MCF 10A (cell line): ENCODE measurements at regions of chr2 and their contacts with region 1.

Region 1: GRCh38 chr2:58448065-58448507 is 207.0 kb upstream of the FANCL start:
- DNase-seq: peak; percentile 92
- H3K4me3 Mint-ChIP-seq: no peak overlapping the region
- H3K27ac Mint-ChIP-seq: peak overlapping the region; percentile 17
- H3K4me1 Mint-ChIP-seq: peaks cover 14% of the 10 kb centered on the region
- H3K27me3 Mint-ChIP-seq: no peaks in the 10 kb centered on the region
- CTCF ChIP-seq: peak; percentile 73

Region 2: DNA sequence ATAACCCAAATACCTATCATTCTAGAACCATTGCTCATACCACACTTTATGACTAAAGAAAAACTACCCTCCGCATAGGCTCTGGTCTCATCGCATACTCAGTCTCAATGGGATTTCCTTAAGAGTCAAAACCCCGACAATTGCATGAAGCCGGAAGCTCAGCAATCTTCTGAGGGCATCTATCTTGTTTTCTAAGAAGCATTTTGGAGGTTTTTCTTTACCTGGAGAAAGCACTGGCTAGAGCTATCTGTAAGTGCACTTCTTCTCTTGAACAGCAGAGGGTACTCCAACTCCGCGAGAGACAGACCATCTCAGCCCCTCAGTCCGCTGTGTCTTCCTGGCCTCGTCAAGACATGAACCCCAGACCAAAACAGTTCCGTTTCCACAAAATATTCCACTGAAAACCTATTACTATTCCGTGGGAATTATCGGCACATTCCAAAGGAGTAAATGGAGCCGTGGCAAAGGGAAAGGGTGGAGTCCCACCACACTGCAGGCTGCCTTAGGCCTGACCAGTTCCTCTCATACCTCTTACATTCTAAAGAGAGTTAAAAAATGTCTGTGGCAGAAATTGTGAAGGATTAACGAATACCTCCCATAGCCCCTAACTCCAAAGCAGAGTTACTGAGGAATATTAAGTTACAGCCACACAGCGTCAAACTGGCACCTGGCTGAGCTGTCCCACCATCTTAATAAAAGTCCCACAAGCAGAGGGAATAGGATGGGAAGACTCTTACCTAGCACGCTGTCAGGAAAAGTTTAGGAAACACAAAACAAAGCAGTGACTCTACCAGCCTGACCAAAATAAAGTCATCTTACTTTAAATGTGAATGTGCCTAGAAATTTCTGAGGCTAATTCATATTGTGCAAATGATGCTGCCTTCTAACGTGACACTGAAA is 727.1 kb before region 1 on chr2:
- CTCF ChIA-PET with region 1: interaction called, 3 read pairs
- POLR2A ChIA-PET with region 1: no interaction called
- intact Hi-C with region 1: loop called (anchors 1 kb)
- DNase-seq: peak; percentile 69
- H3K4me3 Mint-ChIP-seq: peak overlapping the region; percentile 64
- H3K27ac Mint-ChIP-seq: no peak overlapping the region
- H3K4me1 Mint-ChIP-seq: peaks cover 11% of the 10 kb centered on the region
- H3K27me3 Mint-ChIP-seq: no peaks in the 10 kb centered on the region
- CTCF ChIP-seq: peak; percentile 66

Region 3: GRCh38 chr2:58046585-58047372 is 401.3 kb before region 1 on chr2 and contains the start of gene VRK2:
- CTCF ChIA-PET with region 1: no interaction called
- POLR2A ChIA-PET with region 1: no interaction called
- intact Hi-C with region 1: loop called (anchors 5 kb)
- DNase-seq: peak; percentile 97
- H3K4me3 Mint-ChIP-seq: peak within 1 kb of the TSS; percentile 86
- H3K27ac Mint-ChIP-seq: peak within 1 kb of the TSS; percentile 90
- H3K4me1 Mint-ChIP-seq: peaks cover 17% of the 10 kb centered on the region
- H3K27me3 Mint-ChIP-seq: no peaks in the 10 kb centered on the region
- CTCF ChIP-seq: no peak
- total RNA-seq, gene VRK2: 44.6 and 52.7 TPM in 2 replicates

Region 4: GRCh38 chr2:58204195-58204959 is 243.7 kb before region 1 on chr2:
- CTCF ChIA-PET with region 1: interaction called, 3 read pairs
- POLR2A ChIA-PET with region 1: no interaction called
- intact Hi-C with region 1: loop called (anchors 10 kb)
- DNase-seq: no peak
- H3K4me3 Mint-ChIP-seq: no peak overlapping the region
- H3K27ac Mint-ChIP-seq: no peak overlapping the region
- H3K4me1 Mint-ChIP-seq: peaks cover 8% of the 10 kb centered on the region
- H3K27me3 Mint-ChIP-seq: no peaks in the 10 kb centered on the region
- CTCF ChIP-seq: no peak

Region 5: GRCh38 chr2:58571181-58571852 is 123.2 kb after region 1 on chr2:
- CTCF ChIA-PET with region 1: interaction called, 4 read pairs
- POLR2A ChIA-PET with region 1: no interaction called
- intact Hi-C with region 1: loop called (anchors 1 kb)
- DNase-seq: peak; percentile 88
- H3K4me3 Mint-ChIP-seq: no peak overlapping the region
- H3K27ac Mint-ChIP-seq: peak overlapping the region; percentile 75
- H3K4me1 Mint-ChIP-seq: peaks cover 18% of the 10 kb centered on the region
- H3K27me3 Mint-ChIP-seq: no peaks in the 10 kb centered on the region
- CTCF ChIP-seq: peak; percentile 87

Region 6: GRCh38 chr2:58896638-58897037 is 448.6 kb after region 1 on chr2:
- CTCF ChIA-PET with region 1: no interaction called
- POLR2A ChIA-PET with region 1: no interaction called
- intact Hi-C with region 1: no loop called
- DNase-seq: peak; percentile 89
- H3K4me3 Mint-ChIP-seq: peak overlapping the region; percentile 39
- H3K27ac Mint-ChIP-seq: peak overlapping the region; percentile 78
- H3K4me1 Mint-ChIP-seq: peaks cover 55% of the 10 kb centered on the region
- H3K27me3 Mint-ChIP-seq: no peaks in the 10 kb centered on the region
- CTCF ChIP-seq: no peak